Mucosa of descending colon (tissue), 3 donors: ENCODE measurements at regions of chr11 and their contacts with region 1.

Region 1: DNA sequence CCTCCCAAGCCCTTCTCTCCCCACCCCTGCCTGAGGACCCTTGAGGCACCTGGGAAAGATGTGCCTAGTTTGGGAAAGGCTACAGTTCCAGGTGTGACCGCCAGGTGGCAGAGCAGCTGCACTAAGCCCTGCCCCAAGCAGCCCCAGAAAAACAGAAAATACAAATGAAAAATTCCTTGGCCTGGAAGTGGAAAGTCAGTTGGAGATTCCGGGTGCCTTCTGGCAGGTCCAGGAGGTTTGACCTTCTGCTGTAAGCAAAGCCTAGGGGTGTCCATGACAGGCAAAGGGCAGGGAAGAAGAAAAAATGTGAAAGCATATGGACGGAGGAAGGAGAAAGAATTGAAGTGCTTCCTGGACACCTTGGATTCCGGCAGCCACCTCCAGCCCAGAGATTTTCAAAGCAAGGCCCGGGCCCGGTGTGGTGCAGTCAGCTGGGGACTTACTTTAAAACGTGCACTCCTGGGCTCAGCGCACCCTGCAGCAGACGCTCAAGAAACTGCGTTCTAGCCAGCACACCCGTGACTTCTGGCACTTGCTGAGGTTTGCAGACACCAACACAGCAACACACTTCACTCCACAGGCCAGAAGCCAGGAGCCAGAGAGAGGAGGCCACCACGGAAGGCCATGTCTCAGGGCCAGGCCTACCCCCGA is 37.3 kb upstream of the SLC22A12 start:
- DNase-seq: peak in 2 of 3 donors; percentile 71 to 81
- ATAC-seq: peak; percentile 80
- H3K4me3 ChIP-seq: no peak overlapping the region
- H3K4me1 ChIP-seq: peaks cover 4% of the 10 kb centered on the region
- CTCF ChIP-seq: peak; percentile 99

Region 2: GRCh38 chr11:64652586-64653387 is 99.1 kb after region 1 on chr11:
- intact Hi-C with region 1: loop called (anchors 2 to 5 kb)
- DNase-seq: peak in 2 of 3 donors; percentile 85 to 88
- ATAC-seq: peak; percentile 79
- H3K4me3 ChIP-seq: no peak overlapping the region
- H3K4me1 ChIP-seq: no peaks in the 10 kb centered on the region
- CTCF ChIP-seq: peak; percentile 70